Right ventricle myocardium superior (tissue), 1 donor: ENCODE measurements at regions of chr4 and their contacts with region 1.

Region 1: GRCh38 chr4:10157478-10158332 is 41.1 kb upstream of the WDR1 start:
- DNase-seq: peak; percentile 45
- ATAC-seq: peak; percentile 67

Region 2: GRCh38 chr4:10554694-10555093 is 397.0 kb after region 1 on chr4:
- intact Hi-C with region 1: loop called (anchors 5 kb)
- DNase-seq: no peak
- ATAC-seq: peak; percentile 81